Aorta (tissue), 5 donors: ENCODE measurements at regions of chr19 and their contacts with region 1.

Region 1: GRCh38 chr19:54448774-54449700 is at the start of gene LENG8:
- DNase-seq: peak; percentile 99
- ATAC-seq: peak; percentile 98
- H3K4me3 ChIP-seq: peak within 1 kb of the TSS; percentile 70 to 92
- H3K27ac ChIP-seq: peak within 1 kb of the TSS; percentile 25 to 95
- H3K4me1 ChIP-seq: no peaks in the 10 kb centered on the region
- H3K27me3 ChIP-seq: no peaks in the 10 kb centered on the region
- total RNA-seq, gene LENG8: 166 to 274 TPM

Region 2: GRCh38 chr19:54029930-54030490 is 419.0 kb before region 1 on chr19:
- intact Hi-C with region 1: no loop called
- DNase-seq: peak in 1 of 2 donors; percentile 56
- ATAC-seq: peak; percentile 52
- H3K4me3 ChIP-seq: no peak overlapping the region
- H3K27ac ChIP-seq: no peak overlapping the region
- H3K4me1 ChIP-seq: no peaks in the 10 kb centered on the region
- H3K27me3 ChIP-seq: no peaks in the 10 kb centered on the region

Region 3: DNA sequence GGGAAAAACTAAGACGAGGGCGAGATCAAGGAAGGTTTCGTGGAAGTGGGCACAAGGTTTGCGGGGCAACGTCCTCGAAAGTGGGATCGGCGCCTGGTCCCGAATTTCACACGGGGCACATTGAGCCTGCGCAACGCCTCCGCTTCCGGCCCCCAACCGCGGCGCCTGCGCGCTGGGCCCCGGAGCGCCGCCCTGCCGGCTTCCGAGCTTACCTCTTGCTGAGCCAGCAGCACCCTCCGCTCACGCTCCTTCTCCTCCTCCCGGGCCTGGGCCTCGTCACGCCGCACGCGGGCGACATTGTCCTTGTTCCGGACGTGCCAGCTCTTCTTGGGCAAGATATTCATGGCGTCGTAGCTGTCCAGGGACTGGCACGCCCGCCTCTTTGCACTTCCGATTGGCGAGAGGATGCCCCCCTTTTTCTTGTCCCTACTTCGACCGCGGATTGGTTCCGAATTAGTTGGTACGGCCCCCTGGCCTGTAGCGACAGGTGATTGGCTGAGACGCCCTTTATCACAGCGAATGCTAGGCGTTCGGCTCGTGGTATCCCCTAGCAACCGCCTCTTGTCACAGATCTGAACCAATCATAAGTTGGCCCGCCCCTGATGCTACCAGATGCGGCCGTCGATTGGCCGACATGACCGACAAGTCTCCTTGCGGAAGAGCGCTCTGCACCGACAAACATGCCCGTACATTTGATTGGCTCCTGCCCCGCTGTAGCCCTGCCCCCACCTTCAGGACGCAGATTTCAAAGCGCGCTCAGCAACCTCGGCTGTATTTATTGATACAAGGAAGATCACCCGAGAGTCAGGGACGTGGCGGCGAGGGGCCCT is 289.5 kb before region 1 on chr19 and contains the start of gene LENG1:
- intact Hi-C with region 1: loop called in 1 of 2 experiments (anchors 10 kb)
- DNase-seq: peak; percentile 98 to 100
- ATAC-seq: peak; percentile 97
- H3K4me3 ChIP-seq: peak within 1 kb of the TSS; percentile 47 to 51
- H3K27ac ChIP-seq: peak within 1 kb of the TSS in 1 of 2 donors; percentile 96
- H3K4me1 ChIP-seq: no peaks in the 10 kb centered on the region
- H3K27me3 ChIP-seq: no peaks in the 10 kb centered on the region
- total RNA-seq, gene LENG1: 5.7 to 6.0 TPM

Region 4: DNA sequence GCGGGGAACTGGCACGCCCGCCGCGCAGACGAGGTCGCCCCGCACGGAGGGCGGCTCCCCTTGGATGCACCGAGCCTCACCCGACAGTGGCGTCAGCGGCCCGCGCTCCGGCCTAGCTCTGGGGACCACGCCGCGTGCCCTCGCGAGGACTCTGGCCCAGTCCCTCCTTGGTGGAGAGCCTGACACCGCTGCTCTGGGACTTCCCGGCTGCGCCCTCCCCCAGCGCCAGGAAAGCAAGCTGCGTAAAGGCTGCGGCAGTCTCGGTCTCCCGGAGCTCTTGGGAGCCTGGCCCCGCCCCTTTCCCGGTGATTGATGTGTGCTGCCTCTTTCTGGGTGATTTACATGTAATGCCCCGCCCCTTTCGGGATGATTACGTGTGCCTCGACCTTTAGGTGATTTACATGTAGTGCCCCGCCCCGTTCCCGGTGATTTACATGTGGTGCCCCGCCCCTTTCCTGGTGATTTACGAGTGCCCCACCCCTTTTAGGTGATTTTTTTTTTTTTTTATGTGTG is 14.6 kb after region 1 on chr19 and contains the start of gene LENG9:
- intact Hi-C with region 1: loop called in 1 of 2 experiments (anchors 1 kb)
- DNase-seq: peak; percentile 99
- ATAC-seq: peak; percentile 87
- H3K4me3 ChIP-seq: peak within 1 kb of the TSS; percentile 39 to 47
- H3K27ac ChIP-seq: peak within 1 kb of the TSS; percentile 62 to 98
- H3K4me1 ChIP-seq: no peaks in the 10 kb centered on the region
- H3K27me3 ChIP-seq: no peaks in the 10 kb centered on the region
- total RNA-seq, gene LENG9: 5.4 to 7.4 TPM

Region 5: GRCh38 chr19:54502518-54503048 is 53.5 kb after region 1 on chr19 and contains the start of gene LAIR2:
- intact Hi-C with region 1: no loop called
- DNase-seq: no peak
- ATAC-seq: no peak
- H3K4me3 ChIP-seq: no peak within 1 kb of the TSS
- H3K27ac ChIP-seq: no peak within 1 kb of the TSS
- H3K4me1 ChIP-seq: no peaks in the 10 kb centered on the region
- H3K27me3 ChIP-seq: no peaks in the 10 kb centered on the region
- total RNA-seq, gene LAIR2: 0.52 to 2.4 TPM